ENCODE measurements at regions of chr13 and their contacts with region 1.

Region 1: GRCh38 chr13:47076500-47076899 is 179.6 kb upstream of the HTR2A start:
- DNase-seq: no peak

Region 2: DNA sequence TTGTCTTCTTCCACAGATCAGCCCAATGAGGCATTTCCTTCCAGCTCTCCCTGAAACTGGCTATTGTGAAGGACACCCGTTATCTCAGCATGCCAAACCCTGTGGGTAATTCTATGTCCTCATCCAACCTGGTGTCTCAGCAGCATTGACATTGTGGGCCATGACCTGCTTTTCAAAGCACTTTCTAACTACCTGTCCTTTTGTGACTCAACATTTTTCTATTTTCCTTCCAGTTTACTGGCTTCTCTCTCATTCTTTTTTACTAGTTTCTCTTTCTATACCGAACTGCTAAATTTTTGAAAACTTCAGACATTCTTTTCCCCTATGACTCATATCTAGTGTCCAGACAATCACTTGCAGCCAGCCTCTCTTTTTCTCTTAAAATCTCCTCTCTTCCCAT is 43.3 kb before region 1 on chr13:
- intact Hi-C with region 1: loop called in 1 of 2 experiments (anchors 1 kb)
- DNase-seq: no peak

Region 3: DNA sequence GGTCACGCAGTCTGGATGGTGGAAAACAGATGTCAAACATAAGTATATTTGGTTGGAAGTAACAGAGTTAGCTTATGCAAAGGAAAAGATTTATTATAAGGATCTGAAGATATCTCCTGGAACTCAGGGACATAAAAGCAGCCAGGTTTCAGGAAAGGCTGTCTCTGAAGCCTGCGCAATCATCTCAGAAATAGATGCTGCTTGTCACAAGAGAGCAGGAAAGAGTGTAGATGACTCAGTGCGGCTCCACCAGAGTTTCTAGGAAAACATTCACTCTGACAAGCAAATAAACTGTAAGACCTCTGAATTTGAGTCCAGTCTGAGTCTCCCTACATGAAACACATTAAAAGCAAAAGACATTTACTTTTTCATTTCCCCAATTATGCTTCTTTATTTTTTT is 40.8 kb after region 1 on chr13:
- intact Hi-C with region 1: no loop called
- DNase-seq: no peak

Measured in posterior vena cava (tissue), 2 donors.